Naive thymus-derived CD4-positive, alpha-beta T cell (primary cell): ENCODE measurements at regions of chr21 and their contacts with region 1.

Region 1: GRCh38 chr21:36319765-36320420 is at the start of gene MORC3:
- DNase-seq: peak; percentile 95 to 98 (median 97)
- ATAC-seq: peak; percentile 96
- H3K4me3 ChIP-seq: peak within 1 kb of the TSS; percentile 78
- H3K4me3 Mint-ChIP-seq: peak within 1 kb of the TSS; percentile 90 to 100 (median 96)
- H3K27ac ChIP-seq: peak within 1 kb of the TSS; percentile 93
- H3K27ac Mint-ChIP-seq: peak within 1 kb of the TSS; percentile 94 to 99 (median 97)
- H3K4me1 ChIP-seq: peaks cover 11 to 22% of the 10 kb centered on the region in 2 donors
- H3K4me1 Mint-ChIP-seq: peaks cover 29 to 40% (median 37%) of the 10 kb centered on the region in 7 donors
- H3K27me3 ChIP-seq: no peaks in the 10 kb centered on the region
- H3K27me3 Mint-ChIP-seq: peaks cover 0 to 5% (median 0%) of the 10 kb centered on the region in 5 donors
- total RNA-seq, gene MORC3: 48.2 to 123 (median 62.0) TPM

Region 2: DNA sequence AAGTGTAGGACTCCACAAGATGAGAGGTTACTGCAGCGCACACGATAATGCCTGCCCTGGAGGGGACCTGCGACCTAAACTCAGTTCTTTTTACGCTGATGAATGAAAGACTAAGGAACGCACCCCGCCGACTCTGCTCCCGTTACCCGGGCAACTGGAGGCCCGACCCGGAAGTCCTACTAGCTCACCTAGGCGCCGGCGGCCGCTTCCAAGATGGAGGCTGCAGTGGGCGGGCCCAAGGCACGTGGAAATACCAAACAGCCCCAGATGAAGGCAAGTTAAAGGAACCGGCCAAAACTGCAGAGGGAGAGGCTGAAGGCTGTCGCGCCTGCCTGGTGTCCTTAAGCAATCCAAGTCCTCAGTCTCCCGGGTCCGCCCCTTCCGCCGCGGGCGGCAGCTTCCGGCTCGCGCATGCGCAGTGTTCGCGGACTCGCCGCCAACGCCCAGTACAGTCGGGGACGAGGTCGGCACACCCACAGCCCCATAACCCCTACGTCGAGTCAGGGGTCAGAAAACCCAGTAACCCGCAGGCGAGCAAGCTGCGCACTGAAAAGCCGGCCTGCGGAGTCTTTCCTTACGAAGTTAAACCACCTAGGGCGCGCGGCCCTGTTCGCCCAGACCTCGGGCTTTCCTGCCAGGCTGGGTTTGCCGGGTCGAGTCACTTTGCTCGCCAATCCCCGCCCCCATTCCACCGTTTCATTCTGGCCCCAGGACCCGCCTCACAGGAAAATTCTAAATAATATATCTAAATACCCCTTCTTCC is 259.6 kb before region 1 on chr21 and contains the start of gene SETD4:
- CTCF ChIA-PET with region 1: interaction called, 3 read pairs
- POLR2A ChIA-PET with region 1: no interaction called
- intact Hi-C with region 1: loop called (anchors 1 to 2 kb)
- DNase-seq: peak; percentile 91 to 97 (median 94)
- ATAC-seq: peak; percentile 93
- H3K4me3 ChIP-seq: peak within 1 kb of the TSS; percentile 80
- H3K4me3 Mint-ChIP-seq: peak within 1 kb of the TSS; percentile 88 to 98 (median 96)
- H3K27ac ChIP-seq: peak within 1 kb of the TSS; percentile 89
- H3K27ac Mint-ChIP-seq: peak within 1 kb of the TSS; percentile 96 to 98 (median 97)
- H3K4me1 ChIP-seq: no peaks in the 10 kb centered on the region
- H3K4me1 Mint-ChIP-seq: peaks cover 2 to 38% (median 24%) of the 10 kb centered on the region in 7 donors
- H3K27me3 ChIP-seq: no peaks in the 10 kb centered on the region
- H3K27me3 Mint-ChIP-seq: peaks cover 0 to 4% (median 0%) of the 10 kb centered on the region in 5 donors
- total RNA-seq, gene SETD4: 17.1 to 31.5 (median 20.9) TPM

Region 3: DNA sequence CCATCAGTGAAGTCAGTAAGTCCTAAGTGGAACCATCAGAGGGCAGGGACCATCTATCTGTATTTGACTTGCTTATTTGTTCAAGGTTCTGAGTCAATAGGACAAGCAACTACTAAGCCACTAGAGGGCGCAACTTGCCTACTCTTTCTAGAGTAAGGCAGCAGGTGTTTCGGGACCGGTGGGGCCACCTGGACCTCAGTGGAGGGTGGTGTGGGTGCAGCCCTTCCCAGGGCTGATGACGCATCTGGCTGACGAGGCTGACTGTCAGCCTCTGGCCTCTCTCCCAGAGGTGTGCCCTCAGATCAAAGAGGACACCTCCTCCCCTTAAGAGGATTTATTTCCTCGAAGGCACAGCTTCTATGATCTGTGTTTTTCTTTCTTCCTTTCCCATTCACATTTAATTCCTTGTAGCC is 178.4 kb before region 1 on chr21:
- CTCF ChIA-PET with region 1: interaction called, 3 read pairs
- POLR2A ChIA-PET with region 1: interaction called, 4 read pairs
- intact Hi-C with region 1: loop called in 1 of 2 experiments (anchors 1 kb)
- DNase-seq: peak; percentile 50 to 92 (median 84)
- ATAC-seq: peak; percentile 99
- H3K4me3 ChIP-seq: no peak overlapping the region
- H3K4me3 Mint-ChIP-seq: peak overlapping the region in 5 of 10 donors; percentile 1 to 15 (median 3)
- H3K27ac ChIP-seq: peak overlapping the region; percentile 74
- H3K27ac Mint-ChIP-seq: peak overlapping the region; percentile 16 to 92 (median 83)
- H3K4me1 ChIP-seq: peaks cover 18 to 19% of the 10 kb centered on the region in 2 donors
- H3K4me1 Mint-ChIP-seq: peaks cover 11 to 42% (median 39%) of the 10 kb centered on the region in 7 donors
- H3K27me3 ChIP-seq: no peaks in the 10 kb centered on the region
- H3K27me3 Mint-ChIP-seq: no peaks in the 10 kb centered on the region

Region 4: DNA sequence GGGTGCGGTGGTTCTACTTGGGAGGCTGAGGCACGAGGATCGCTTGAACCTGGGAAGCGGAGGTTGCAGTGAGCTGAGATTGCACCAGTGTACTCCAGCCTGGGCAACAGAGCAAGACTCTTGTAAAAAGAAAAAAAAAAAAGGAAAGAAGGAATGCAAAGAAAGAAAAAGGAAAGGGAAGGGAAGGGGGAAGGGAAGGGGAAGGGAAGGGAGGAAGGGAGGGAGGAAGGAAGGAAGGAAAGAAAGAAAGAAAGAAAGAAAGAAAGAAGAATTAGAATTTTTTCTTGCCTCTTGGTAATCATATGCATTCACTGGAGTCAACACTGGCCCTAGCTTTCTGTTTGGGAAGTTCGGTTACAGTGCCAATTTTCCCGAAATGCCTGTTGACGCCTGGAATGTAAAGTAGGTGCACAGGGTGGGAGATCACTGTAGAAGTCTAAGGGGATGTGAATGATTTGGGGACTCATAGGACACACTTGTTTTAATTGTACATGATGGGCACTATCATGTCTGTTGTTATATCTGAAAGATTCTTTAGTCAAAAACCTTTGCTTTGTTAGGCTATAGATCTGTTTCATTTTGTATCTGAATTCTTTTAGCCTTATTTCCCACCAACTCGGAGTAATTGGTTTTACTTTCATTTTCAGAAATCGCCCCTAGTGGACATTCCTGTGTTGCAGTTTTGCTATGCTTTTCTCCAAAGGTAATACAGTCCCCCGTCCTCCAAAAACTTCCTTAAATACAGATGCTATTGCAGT is 59.7 kb before region 1 on chr21:
- CTCF ChIA-PET with region 1: interaction called, 4 read pairs
- POLR2A ChIA-PET with region 1: interaction called, 18 read pairs
- intact Hi-C with region 1: loop called (anchors 1 kb)
- DNase-seq: peak in 7 of 9 donors; percentile 54 to 76 (median 68)
- ATAC-seq: peak; percentile 88
- H3K4me3 ChIP-seq: peak overlapping the region; percentile 57
- H3K4me3 Mint-ChIP-seq: peak overlapping the region; percentile 81 to 91 (median 86)
- H3K27ac ChIP-seq: peak overlapping the region; percentile 76
- H3K27ac Mint-ChIP-seq: peak overlapping the region; percentile 89 to 97 (median 93)
- H3K4me1 ChIP-seq: peaks cover 0 to 6% of the 10 kb centered on the region in 2 donors
- H3K4me1 Mint-ChIP-seq: peaks cover 9 to 24% (median 18%) of the 10 kb centered on the region in 7 donors
- H3K27me3 ChIP-seq: no peaks in the 10 kb centered on the region
- H3K27me3 Mint-ChIP-seq: no peaks in the 10 kb centered on the region

Region 5: GRCh38 chr21:36297921-36298594 is 21.8 kb before region 1 on chr21:
- CTCF ChIA-PET with region 1: interaction called, 34 read pairs
- POLR2A ChIA-PET with region 1: interaction called, 361 read pairs
- intact Hi-C with region 1: loop called (anchors 1 kb)
- DNase-seq: peak; percentile 35 to 89 (median 87)
- ATAC-seq: peak; percentile 99
- H3K4me3 ChIP-seq: peak overlapping the region; percentile 52
- H3K4me3 Mint-ChIP-seq: peak overlapping the region; percentile 71 to 88 (median 84)
- H3K27ac ChIP-seq: peak overlapping the region; percentile 84
- H3K27ac Mint-ChIP-seq: peak overlapping the region; percentile 91 to 100 (median 98)
- H3K4me1 ChIP-seq: peaks cover 21 to 36% of the 10 kb centered on the region in 2 donors
- H3K4me1 Mint-ChIP-seq: peaks cover 24 to 53% (median 40%) of the 10 kb centered on the region in 7 donors
- H3K27me3 ChIP-seq: no peaks in the 10 kb centered on the region
- H3K27me3 Mint-ChIP-seq: no peaks in the 10 kb centered on the region

Region 6: DNA sequence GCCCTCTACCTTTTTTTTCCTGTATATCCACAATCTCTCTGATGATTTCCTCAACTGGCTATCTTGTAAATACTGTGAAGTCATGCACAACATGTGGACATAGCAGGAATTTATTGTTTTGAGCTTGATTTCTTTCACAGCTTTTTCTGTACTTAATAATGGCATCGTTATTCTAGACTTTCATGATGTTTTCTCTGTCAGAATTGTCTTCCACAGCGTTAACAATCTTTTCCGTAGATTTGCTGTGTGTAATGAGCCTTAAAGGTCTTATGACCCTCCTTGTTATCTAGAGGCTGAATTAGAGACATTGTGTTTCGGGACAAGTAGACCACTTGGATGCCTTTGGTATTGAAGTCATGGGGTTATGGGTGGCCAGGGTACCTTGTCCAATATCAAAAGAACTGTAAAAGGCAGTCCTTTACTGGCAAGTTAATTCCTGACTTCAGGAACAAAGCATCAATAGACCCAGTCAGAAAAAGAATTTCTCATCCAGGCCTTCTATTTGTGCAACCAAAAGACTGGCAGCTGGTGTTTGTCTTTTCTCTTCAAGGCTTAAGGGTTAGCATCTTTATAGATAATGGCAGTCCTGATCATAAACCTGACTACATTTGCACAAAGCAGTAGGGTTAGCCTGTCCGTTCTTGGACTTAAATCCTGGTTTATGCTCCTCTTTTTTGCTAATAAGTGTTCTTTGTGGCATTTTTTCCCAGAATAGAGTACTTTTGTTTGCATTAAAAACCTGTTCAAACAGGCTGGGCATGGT is 35.2 kb after region 1 on chr21:
- CTCF ChIA-PET with region 1: no interaction called
- POLR2A ChIA-PET with region 1: no interaction called
- intact Hi-C with region 1: no loop called
- DNase-seq: no peak
- ATAC-seq: no peak
- H3K4me3 ChIP-seq: no peak overlapping the region
- H3K4me3 Mint-ChIP-seq: no peak overlapping the region
- H3K27ac ChIP-seq: no peak overlapping the region
- H3K27ac Mint-ChIP-seq: peak overlapping the region in 5 of 9 donors; percentile 32 to 47 (median 40)
- H3K4me1 ChIP-seq: no peaks in the 10 kb centered on the region
- H3K4me1 Mint-ChIP-seq: peaks cover 3 to 19% (median 11%) of the 10 kb centered on the region in 7 donors
- H3K27me3 ChIP-seq: no peaks in the 10 kb centered on the region
- H3K27me3 Mint-ChIP-seq: no peaks in the 10 kb centered on the region

Region 7: DNA sequence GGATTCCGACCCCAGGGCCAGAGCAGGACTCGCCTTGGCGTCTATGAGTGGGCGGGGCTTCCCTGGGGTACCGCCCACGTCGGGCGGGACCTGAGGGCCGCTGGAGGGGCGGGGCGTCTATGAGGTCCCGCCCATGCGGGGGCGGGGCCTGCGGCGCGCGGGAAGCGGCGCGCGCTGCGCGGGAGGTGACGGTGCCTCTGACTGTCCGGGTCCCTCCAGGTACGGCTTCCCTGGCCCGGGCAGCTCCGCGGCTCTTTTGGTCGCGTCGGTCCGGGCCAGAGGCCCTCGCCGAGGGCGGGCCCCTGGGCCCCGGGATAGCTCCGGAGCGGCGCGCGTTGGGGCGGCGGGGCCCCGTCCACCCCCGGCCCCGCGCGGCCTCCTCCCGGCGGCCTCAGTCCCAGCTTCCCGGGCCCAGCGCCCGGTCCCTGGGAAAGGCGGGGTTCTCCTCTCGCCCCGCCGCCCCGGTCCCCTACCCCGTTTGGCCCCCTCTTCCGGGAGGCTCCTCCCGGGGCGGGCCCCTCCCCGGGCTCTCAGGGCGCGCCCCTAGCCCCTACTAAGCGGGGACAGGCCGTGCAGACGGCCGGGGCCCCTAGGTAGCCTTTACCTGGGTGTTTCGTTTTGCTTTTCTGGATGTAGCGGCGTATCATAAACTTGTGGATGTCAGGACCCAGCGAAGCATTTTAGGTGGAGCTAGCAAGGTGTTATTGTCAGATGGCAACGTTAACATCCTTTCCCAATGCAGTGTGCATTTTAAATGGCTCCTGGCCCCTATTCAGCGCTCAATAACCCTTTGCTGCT is 65.5 kb after region 1 on chr21 and contains the start of gene CHAF1B:
- CTCF ChIA-PET with region 1: no interaction called
- POLR2A ChIA-PET with region 1: interaction called, 4 read pairs
- intact Hi-C with region 1: loop called (anchors 1 kb)
- DNase-seq: peak; percentile 63 to 94 (median 82)
- ATAC-seq: peak; percentile 99
- H3K4me3 ChIP-seq: peak within 1 kb of the TSS; percentile 77
- H3K4me3 Mint-ChIP-seq: peak within 1 kb of the TSS; percentile 70 to 89 (median 85)
- H3K27ac ChIP-seq: peak within 1 kb of the TSS; percentile 68
- H3K27ac Mint-ChIP-seq: peak within 1 kb of the TSS in 8 of 9 donors; percentile 7 to 83 (median 56)
- H3K4me1 ChIP-seq: peaks cover 0 to 4% of the 10 kb centered on the region in 2 donors
- H3K4me1 Mint-ChIP-seq: peaks cover 4 to 30% (median 6%) of the 10 kb centered on the region in 7 donors
- H3K27me3 ChIP-seq: no peaks in the 10 kb centered on the region
- H3K27me3 Mint-ChIP-seq: no peaks in the 10 kb centered on the region
- total RNA-seq, gene CHAF1B: 1.5 to 21.4 (median 4.0) TPM